CD14-positive monocyte (primary cell): ENCODE measurements at regions of chr21 and their contacts with region 1.

Region 1: GRCh38 chr21:15729674-15730483 is at the start of gene USP25:
- DNase-seq: peak; percentile 82 to 84 (median 83)
- H3K4me3 ChIP-seq: peak within 1 kb of the TSS; percentile 77 to 98 (median 90)
- H3K4me3 Mint-ChIP-seq: peak within 1 kb of the TSS; percentile 86 to 95
- H3K27ac ChIP-seq: peak within 1 kb of the TSS; percentile 64 to 85
- H3K27ac Mint-ChIP-seq: peak within 1 kb of the TSS; percentile 88 to 92 (median 91)
- H3K4me1 ChIP-seq: peaks cover 23 to 35% of the 10 kb centered on the region in 2 donors
- H3K4me1 Mint-ChIP-seq: peaks cover 30% of the 10 kb centered on the region
- H3K27me3 ChIP-seq: no peaks in the 10 kb centered on the region
- H3K27me3 Mint-ChIP-seq: no peaks in the 10 kb centered on the region
- CTCF ChIP-seq: no peak
- polyA plus RNA-seq, gene USP25: 7.2 to 15.6 (median 9.6) TPM

Region 2: GRCh38 chr21:14382835-14383594 is 1346.9 kb before region 1 on chr21 and contains the start of gene HSPA13:
- intact Hi-C with region 1: loop called in 1 of 2 experiments (anchors 5 kb)
- DNase-seq: peak; percentile 99 to 100 (median 100)
- H3K4me3 ChIP-seq: peak within 1 kb of the TSS; percentile 68 to 96 (median 68)
- H3K4me3 Mint-ChIP-seq: peak within 1 kb of the TSS; percentile 100
- H3K27ac ChIP-seq: peak within 1 kb of the TSS; percentile 81 to 96
- H3K27ac Mint-ChIP-seq: peak within 1 kb of the TSS; percentile 96 to 100 (median 99)
- H3K4me1 ChIP-seq: peaks cover 12 to 16% of the 10 kb centered on the region in 2 donors
- H3K4me1 Mint-ChIP-seq: peaks cover 23% of the 10 kb centered on the region
- H3K27me3 ChIP-seq: no peaks in the 10 kb centered on the region
- H3K27me3 Mint-ChIP-seq: peaks cover 0 to 2% (median 0%) of the 10 kb centered on the region in 3 donors
- CTCF ChIP-seq: no peak
- polyA plus RNA-seq, gene HSPA13: 6.8 to 13.9 (median 12.2) TPM

Region 3: DNA sequence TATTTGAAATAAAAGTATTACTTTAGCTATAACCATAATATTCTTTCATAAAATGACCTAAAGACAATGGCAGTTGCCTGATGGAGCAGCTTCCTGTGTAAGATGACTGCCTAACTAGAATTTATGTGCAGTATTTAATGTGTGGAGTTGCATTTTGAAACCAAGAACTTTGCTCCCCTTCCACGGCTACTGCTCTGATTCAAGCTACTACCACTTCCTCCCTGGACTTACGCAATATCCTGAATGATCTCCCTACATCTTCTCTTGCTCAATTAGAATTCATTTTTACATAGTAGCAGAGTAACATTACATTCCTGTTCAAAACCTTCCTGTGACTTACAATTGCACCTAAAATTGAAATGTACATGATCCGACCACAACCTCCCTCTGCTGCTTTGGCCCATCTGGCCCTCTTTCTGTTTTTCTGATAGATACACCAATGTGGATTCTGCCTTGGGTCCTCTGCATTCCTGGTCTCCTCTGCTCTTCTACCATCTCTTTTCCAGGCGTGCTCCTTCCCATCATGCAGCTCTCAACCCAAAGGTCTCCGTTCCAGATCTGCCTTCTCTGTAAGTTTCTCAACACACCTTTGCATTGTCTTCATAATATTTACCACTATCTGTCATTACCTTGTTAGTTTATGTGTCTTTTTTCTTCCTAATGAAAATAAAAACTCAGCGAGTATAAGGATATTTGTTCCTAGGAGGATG is 47.5 kb before region 1 on chr21:
- intact Hi-C with region 1: loop called (anchors 2 to 5 kb)
- DNase-seq: peak; percentile 84 to 91 (median 89)
- H3K4me3 ChIP-seq: peak overlapping the region; percentile 38 to 78 (median 57)
- H3K4me3 Mint-ChIP-seq: peak overlapping the region; percentile 72 to 91
- H3K27ac ChIP-seq: peak overlapping the region; percentile 85 to 93
- H3K27ac Mint-ChIP-seq: peak overlapping the region; percentile 94 to 99 (median 96)
- H3K4me1 ChIP-seq: peaks cover 57 to 66% of the 10 kb centered on the region in 2 donors
- H3K4me1 Mint-ChIP-seq: peaks cover 48% of the 10 kb centered on the region
- H3K27me3 ChIP-seq: no peaks in the 10 kb centered on the region
- H3K27me3 Mint-ChIP-seq: no peaks in the 10 kb centered on the region
- CTCF ChIP-seq: no peak

Region 4: GRCh38 chr21:15688809-15689208 is 41.1 kb before region 1 on chr21:
- intact Hi-C with region 1: loop called (anchors 2 to 5 kb)
- DNase-seq: peak; percentile 53 to 74 (median 61)
- H3K4me3 ChIP-seq: peak overlapping the region in 2 of 3 experiments; percentile 41 to 65
- H3K4me3 Mint-ChIP-seq: peak overlapping the region; percentile 56 to 78
- H3K27ac ChIP-seq: peak overlapping the region in 1 of 2 donors; percentile 85
- H3K27ac Mint-ChIP-seq: peak overlapping the region; percentile 82 to 93 (median 88)
- H3K4me1 ChIP-seq: peaks cover 64 to 69% of the 10 kb centered on the region in 2 donors
- H3K4me1 Mint-ChIP-seq: peaks cover 65% of the 10 kb centered on the region
- H3K27me3 ChIP-seq: no peaks in the 10 kb centered on the region
- H3K27me3 Mint-ChIP-seq: peaks cover 0 to 3% (median 0%) of the 10 kb centered on the region in 3 donors
- CTCF ChIP-seq: no peak